Activated CD4-positive, alpha-beta memory T cell treated with anti-CD3 and anti-CD28 coated beads for 36 hours (primary cell): ENCODE measurements at regions of chrX and their contacts with region 1.

Region 1: GRCh38 chrX:74614093-74614909 is at the start of gene RLIM:
- DNase-seq: peak; percentile 95
- H3K4me3 Mint-ChIP-seq: peak within 1 kb of the TSS; percentile 98
- H3K27ac Mint-ChIP-seq: peak within 1 kb of the TSS; percentile 99
- H3K4me1 Mint-ChIP-seq: peaks cover 12% of the 10 kb centered on the region
- H3K27me3 Mint-ChIP-seq: no peaks in the 10 kb centered on the region
- total RNA-seq, gene RLIM: 36.6 to 37.5 TPM

Region 2: GRCh38 chrX:74262452-74263209 is 351.7 kb before region 1 on chrX:
- CTCF ChIA-PET with region 1: no interaction called
- POLR2A ChIA-PET with region 1: no interaction called
- intact Hi-C with region 1: no loop called
- DNase-seq: no peak
- H3K4me3 Mint-ChIP-seq: no peak overlapping the region
- H3K27ac Mint-ChIP-seq: no peak overlapping the region
- H3K4me1 Mint-ChIP-seq: no peaks in the 10 kb centered on the region
- H3K27me3 Mint-ChIP-seq: no peaks in the 10 kb centered on the region

Region 3: DNA sequence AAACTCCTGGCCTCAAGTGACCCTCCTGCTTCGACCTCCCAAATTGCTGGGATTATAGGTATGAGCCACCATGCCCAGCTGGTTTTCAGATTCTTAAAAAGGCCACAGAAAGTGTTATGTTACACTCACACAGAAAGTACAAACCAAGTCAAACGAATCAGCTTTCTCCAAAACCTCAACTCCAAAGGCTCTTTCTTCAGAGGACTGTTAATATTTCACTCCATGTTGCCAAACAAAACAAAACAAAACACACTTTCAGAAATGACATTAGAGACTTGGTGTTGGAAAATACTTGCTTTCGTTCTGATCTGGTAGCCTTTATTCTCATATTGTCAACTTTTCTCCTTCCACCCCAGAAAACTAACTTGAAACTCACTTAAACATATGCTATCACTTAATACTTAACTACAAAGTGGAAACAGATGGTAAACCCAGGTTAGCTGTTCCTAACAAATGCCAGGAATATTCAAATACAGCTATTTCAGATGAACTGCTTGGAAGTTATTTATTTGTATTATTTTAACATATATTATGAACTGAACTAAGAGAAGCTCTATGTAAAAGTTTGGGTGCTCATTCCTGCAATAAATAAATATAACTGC is 34.6 kb before region 1 on chrX:
- CTCF ChIA-PET with region 1: no interaction called
- POLR2A ChIA-PET with region 1: interaction called, 6 read pairs
- intact Hi-C with region 1: loop called (anchors 1 kb)
- DNase-seq: peak; percentile 8
- H3K4me3 Mint-ChIP-seq: no peak overlapping the region
- H3K27ac Mint-ChIP-seq: peak overlapping the region; percentile 69
- H3K4me1 Mint-ChIP-seq: peaks cover 13% of the 10 kb centered on the region
- H3K27me3 Mint-ChIP-seq: no peaks in the 10 kb centered on the region

Region 4: GRCh38 chrX:74593593-74593992 is 20.7 kb before region 1 on chrX:
- CTCF ChIA-PET with region 1: no interaction called
- POLR2A ChIA-PET with region 1: no interaction called
- intact Hi-C with region 1: no loop called
- DNase-seq: no peak
- H3K4me3 Mint-ChIP-seq: no peak overlapping the region
- H3K27ac Mint-ChIP-seq: no peak overlapping the region
- H3K4me1 Mint-ChIP-seq: peaks cover 3% of the 10 kb centered on the region
- H3K27me3 Mint-ChIP-seq: no peaks in the 10 kb centered on the region

Region 5: DNA sequence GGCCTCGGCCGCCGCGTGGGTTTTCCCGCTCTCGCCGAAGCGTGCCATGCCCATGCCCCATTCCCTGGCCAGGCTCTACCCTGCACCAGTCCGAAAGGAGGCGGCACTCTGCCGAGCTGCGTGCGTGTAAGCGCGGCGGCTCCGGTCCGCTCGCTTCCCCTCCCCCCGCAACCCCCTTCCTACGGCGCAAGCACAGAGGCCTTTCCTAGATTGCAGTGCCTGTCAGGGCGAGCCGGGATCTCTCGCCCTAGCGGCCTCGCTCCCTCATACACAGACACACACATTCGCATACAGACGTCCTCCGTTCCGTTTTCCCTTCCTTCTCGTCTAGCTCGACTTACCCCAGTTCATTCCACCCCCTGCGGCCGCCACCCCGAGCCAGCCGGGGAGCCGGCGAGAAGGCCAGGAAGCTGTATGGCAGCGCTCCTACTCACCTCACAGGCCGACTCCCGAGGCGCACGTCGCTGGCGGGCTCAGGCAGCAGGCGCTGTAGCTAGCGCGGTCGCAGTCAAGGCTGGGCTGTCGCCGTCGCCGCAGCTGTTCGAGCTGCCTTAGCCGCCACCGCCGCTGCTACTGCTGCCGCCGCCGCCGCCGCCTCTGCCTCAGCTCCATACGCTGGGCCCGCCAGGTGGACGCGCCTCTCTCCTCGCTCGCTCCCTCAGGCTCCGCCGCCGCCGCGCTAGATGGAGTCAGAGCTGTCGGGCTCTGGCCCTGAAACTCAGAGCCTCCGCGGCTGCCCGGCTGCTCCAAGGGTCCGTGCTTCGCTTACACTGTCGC is 310.3 kb after region 1 on chrX:
- CTCF ChIA-PET with region 1: no interaction called
- POLR2A ChIA-PET with region 1: interaction called, 3 read pairs
- intact Hi-C with region 1: loop called (anchors 1 kb)
- DNase-seq: peak; percentile 47
- H3K4me3 Mint-ChIP-seq: peak overlapping the region; percentile 80
- H3K27ac Mint-ChIP-seq: peak overlapping the region; percentile 64
- H3K4me1 Mint-ChIP-seq: peaks cover 8% of the 10 kb centered on the region
- H3K27me3 Mint-ChIP-seq: peaks cover 8% of the 10 kb centered on the region

Region 6: GRCh38 chrX:76148753-76149152 is 1534.5 kb after region 1 on chrX:
- CTCF ChIA-PET with region 1: no interaction called
- POLR2A ChIA-PET with region 1: no interaction called
- intact Hi-C with region 1: loop called (anchors 5 kb)
- DNase-seq: peak; percentile 57
- H3K4me3 Mint-ChIP-seq: peak overlapping the region; percentile 74
- H3K27ac Mint-ChIP-seq: peak overlapping the region; percentile 99
- H3K4me1 Mint-ChIP-seq: peaks cover 11% of the 10 kb centered on the region
- H3K27me3 Mint-ChIP-seq: no peaks in the 10 kb centered on the region

Region 7: GRCh38 chrX:76172325-76172893 is 1558.1 kb after region 1 on chrX:
- CTCF ChIA-PET with region 1: no interaction called
- POLR2A ChIA-PET with region 1: no interaction called
- intact Hi-C with region 1: loop called (anchors 10 kb)
- DNase-seq: no peak
- H3K4me3 Mint-ChIP-seq: peak overlapping the region; percentile 89
- H3K27ac Mint-ChIP-seq: peak overlapping the region; percentile 94
- H3K4me1 Mint-ChIP-seq: peaks cover 54% of the 10 kb centered on the region
- H3K27me3 Mint-ChIP-seq: no peaks in the 10 kb centered on the region